GM10248 (cell line): ENCODE measurements at regions of chr1 and their contacts with region 1.

Region 1: DNA sequence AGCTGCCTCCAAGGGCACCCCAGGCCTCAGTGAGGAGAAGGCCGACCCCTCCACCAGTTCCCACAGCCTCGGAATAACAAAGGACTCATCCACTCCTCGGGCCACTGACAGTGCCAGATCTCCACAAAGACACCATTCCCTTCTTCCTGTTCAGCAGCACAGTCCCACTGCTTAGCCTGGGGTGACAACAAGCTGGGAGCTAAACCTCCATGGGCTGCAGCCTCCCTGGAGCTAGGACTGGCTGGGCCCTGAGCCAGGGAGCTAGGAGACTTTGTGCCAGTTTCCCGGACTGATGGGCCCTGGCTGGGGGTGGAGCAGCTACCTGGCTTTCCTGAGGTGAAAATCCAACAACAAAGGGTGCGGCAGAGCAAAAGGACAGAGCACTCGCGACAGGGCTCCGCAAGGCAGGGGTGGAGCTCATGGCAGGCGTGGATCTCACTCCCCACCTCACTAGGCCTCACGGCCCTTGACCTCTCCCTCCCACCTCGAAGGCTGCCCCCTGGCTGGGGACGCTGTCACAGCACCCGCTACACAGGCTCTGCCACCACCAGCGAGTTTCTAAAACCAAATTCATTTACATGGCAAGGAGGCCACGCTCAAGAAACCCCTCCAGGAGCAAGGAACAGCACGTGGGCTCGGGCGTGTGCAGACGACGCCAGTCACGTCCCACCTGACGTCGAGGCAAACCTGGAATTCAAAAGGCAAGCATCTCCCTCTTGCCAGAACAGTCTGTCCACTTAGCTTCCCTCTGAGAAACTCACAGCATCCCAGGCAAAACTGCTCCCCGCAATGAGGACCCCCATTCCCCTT is 13.8 kb downstream of the SLC35E2B start:
- DNase-seq: peak; percentile 59
- CTCF ChIP-seq: peak; percentile 86

Region 2: GRCh38 chr1:1665800-1666251 is 13.0 kb before region 1 on chr1:
- CTCF ChIA-PET with region 1: interaction called, 16 read pairs
- POLR2A ChIA-PET with region 1: no interaction called
- DNase-seq: peak; percentile 23
- CTCF ChIP-seq: peak; percentile 38